Activated CD8-positive, alpha-beta T cell treated with anti-CD3 and anti-CD28 coated beads for 36 hours (primary cell): ENCODE measurements at regions of chr5 and their contacts with region 1.

Region 1: GRCh38 chr5:74640450-74640953 is at the start of gene ENC1:
- DNase-seq: peak; percentile 78
- ATAC-seq: peak; percentile 86
- H3K4me3 Mint-ChIP-seq: peak within 1 kb of the TSS; percentile 74
- H3K27ac Mint-ChIP-seq: no peak within 1 kb of the TSS
- H3K4me1 Mint-ChIP-seq: peaks cover 30% of the 10 kb centered on the region
- H3K27me3 Mint-ChIP-seq: peaks cover 39% of the 10 kb centered on the region
- CTCF ChIP-seq: peak; percentile 51
- total RNA-seq, gene ENC1: 0.16 to 0.60 TPM

Region 2: GRCh38 chr5:74579215-74579614 is 61.3 kb before region 1 on chr5:
- CTCF ChIA-PET with region 1: interaction called, 6 read pairs
- POLR2A ChIA-PET with region 1: no interaction called
- intact Hi-C with region 1: loop called (anchors 2 kb)
- DNase-seq: peak; percentile 81
- ATAC-seq: peak; percentile 83
- H3K4me3 Mint-ChIP-seq: peak overlapping the region; percentile 9
- H3K27ac Mint-ChIP-seq: peak overlapping the region; percentile 53
- H3K4me1 Mint-ChIP-seq: peaks cover 32% of the 10 kb centered on the region
- H3K27me3 Mint-ChIP-seq: no peaks in the 10 kb centered on the region
- CTCF ChIP-seq: no peak

Region 3: DNA sequence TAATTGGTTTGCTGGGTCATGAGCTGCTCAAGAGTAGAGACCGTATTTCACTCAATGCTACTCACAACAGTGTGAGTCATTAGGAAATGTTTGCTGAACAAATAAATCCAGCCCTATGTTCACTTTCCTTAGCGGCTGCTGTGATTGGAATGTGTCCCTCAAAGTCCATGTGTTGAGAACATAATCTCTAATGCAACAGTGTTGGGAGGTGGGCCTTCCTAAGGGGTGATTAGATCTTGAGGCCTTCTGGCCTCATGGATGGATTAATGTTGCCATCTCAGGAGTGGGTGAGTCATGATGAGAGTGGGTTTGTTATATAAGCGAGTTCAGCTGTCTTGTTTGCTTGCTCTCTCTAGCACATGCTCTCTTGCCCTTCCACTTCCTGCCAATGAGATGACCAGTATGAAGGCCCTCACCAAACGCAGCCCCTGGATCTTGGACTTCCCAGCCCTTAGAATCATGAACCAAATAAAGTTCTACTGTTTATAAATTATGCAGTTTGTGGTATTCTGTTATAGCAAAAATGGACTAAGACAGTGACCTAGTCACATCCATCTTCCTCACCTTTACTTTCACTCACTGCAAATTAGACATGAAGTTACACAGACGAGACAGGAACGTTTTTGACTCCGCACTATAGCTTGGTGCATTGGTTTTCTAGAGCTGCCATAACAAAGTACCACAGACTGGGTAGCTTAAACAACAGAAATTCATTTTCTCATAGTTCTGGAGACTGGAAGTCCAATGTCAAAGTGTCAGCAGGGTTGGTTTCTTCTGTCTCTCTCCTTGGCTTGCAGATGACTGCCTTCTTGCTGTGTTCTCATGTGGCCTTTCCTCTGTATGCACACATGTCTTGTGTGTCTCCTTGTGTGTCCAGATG is 276.6 kb after region 1 on chr5:
- CTCF ChIA-PET with region 1: no interaction called
- POLR2A ChIA-PET with region 1: no interaction called
- intact Hi-C with region 1: no loop called
- DNase-seq: no peak
- ATAC-seq: no peak
- H3K4me3 Mint-ChIP-seq: no peak overlapping the region
- H3K27ac Mint-ChIP-seq: no peak overlapping the region
- H3K4me1 Mint-ChIP-seq: no peaks in the 10 kb centered on the region
- H3K27me3 Mint-ChIP-seq: peaks cover 6% of the 10 kb centered on the region
- CTCF ChIP-seq: no peak